Activated CD8-positive, alpha-beta memory T cell treated with anti-CD3 and anti-CD28 coated beads, Interleukin-2, amount 10 ng/mL, durations not matched to agents 7 days and 5 days (primary cell): ENCODE measurements at regions of chr20 and their contacts with region 1.

Region 1: GRCh38 chr20:34312544-34313217 is 9.5 kb upstream of the AHCY start:
- DNase-seq: peak; percentile 92
- ATAC-seq: peak; percentile 100
- H3K4me3 Mint-ChIP-seq: no peak overlapping the region
- H3K27ac Mint-ChIP-seq: no peak overlapping the region
- H3K4me1 Mint-ChIP-seq: peaks cover 17% of the 10 kb centered on the region
- H3K27me3 Mint-ChIP-seq: peaks cover 27% of the 10 kb centered on the region

Region 2: DNA sequence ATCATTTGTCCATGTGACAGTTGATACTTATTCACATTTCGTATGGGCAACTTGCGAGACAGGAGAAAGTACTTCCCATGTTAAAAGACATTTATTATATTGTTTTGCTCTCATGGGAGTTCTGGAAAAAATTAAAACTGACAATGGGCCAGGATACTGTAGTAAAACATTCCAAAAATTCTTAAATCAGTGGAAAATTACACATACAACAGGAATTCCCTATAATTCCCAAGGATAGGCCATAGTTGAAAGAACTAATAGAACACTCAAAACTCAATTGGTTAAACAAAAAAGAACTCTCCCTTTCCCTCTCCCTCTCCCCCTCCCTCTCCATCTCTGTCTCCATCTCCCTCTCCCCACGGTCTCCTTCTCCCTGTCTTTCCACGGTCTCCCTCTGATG is 181.2 kb before region 1 on chr20:
- CTCF ChIA-PET with region 1: no interaction called
- DNase-seq: no peak
- ATAC-seq: no peak
- H3K4me3 Mint-ChIP-seq: no peak overlapping the region
- H3K27ac Mint-ChIP-seq: no peak overlapping the region
- H3K4me1 Mint-ChIP-seq: peaks cover 7% of the 10 kb centered on the region
- H3K27me3 Mint-ChIP-seq: peaks cover 43% of the 10 kb centered on the region

Region 3: GRCh38 chr20:34324541-34324940 is 11.9 kb after region 1 on chr20:
- CTCF ChIA-PET with region 1: interaction called, 28 read pairs
- DNase-seq: no peak
- ATAC-seq: no peak
- H3K4me3 Mint-ChIP-seq: no peak overlapping the region
- H3K27ac Mint-ChIP-seq: no peak overlapping the region
- H3K4me1 Mint-ChIP-seq: no peaks in the 10 kb centered on the region
- H3K27me3 Mint-ChIP-seq: peaks cover 20% of the 10 kb centered on the region

Region 4: GRCh38 chr20:34377072-34377847 is 64.6 kb after region 1 on chr20:
- CTCF ChIA-PET with region 1: interaction called, 14 read pairs
- DNase-seq: peak; percentile 48
- ATAC-seq: peak; percentile 60
- H3K4me3 Mint-ChIP-seq: no peak overlapping the region
- H3K27ac Mint-ChIP-seq: peak overlapping the region; percentile 44
- H3K4me1 Mint-ChIP-seq: peaks cover 30% of the 10 kb centered on the region
- H3K27me3 Mint-ChIP-seq: no peaks in the 10 kb centered on the region

Region 5: GRCh38 chr20:34445177-34446065 is 132.7 kb after region 1 on chr20:
- CTCF ChIA-PET with region 1: interaction called, 16 read pairs
- DNase-seq: no peak
- ATAC-seq: no peak
- H3K4me3 Mint-ChIP-seq: no peak overlapping the region
- H3K27ac Mint-ChIP-seq: no peak overlapping the region
- H3K4me1 Mint-ChIP-seq: no peaks in the 10 kb centered on the region
- H3K27me3 Mint-ChIP-seq: no peaks in the 10 kb centered on the region

Region 6: DNA sequence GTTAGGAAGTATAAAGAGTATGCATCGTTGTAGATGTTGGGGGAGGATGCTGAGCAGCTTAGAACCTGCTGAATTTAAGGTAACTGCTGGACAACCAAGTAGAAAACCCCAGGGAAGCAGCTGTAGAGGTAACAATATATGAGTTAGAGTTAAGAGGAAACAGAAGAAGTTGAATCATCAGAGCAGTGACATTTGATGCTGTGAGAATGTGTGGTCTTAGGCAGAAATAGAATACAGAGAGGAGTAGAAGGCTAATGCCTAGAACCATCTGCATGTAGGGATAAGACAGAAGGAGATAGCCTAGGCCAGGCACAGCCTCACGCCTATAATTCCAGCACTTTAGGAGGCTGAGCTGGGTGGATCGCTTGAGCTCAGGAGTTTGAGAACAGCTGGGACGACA is 181.0 kb after region 1 on chr20:
- CTCF ChIA-PET with region 1: interaction called, 15 read pairs
- DNase-seq: no peak
- ATAC-seq: no peak
- H3K4me3 Mint-ChIP-seq: no peak overlapping the region
- H3K27ac Mint-ChIP-seq: no peak overlapping the region
- H3K4me1 Mint-ChIP-seq: peaks cover 10% of the 10 kb centered on the region
- H3K27me3 Mint-ChIP-seq: no peaks in the 10 kb centered on the region

Region 7: GRCh38 chr20:34544109-34544793 is 231.6 kb after region 1 on chr20:
- CTCF ChIA-PET with region 1: interaction called, 10 read pairs
- DNase-seq: no peak
- ATAC-seq: no peak
- H3K4me3 Mint-ChIP-seq: no peak overlapping the region
- H3K27ac Mint-ChIP-seq: no peak overlapping the region
- H3K4me1 Mint-ChIP-seq: peaks cover 9% of the 10 kb centered on the region
- H3K27me3 Mint-ChIP-seq: no peaks in the 10 kb centered on the region